GM12878 (cell line): ENCODE measurements at regions of chrX and their contacts with region 1.

Region 1: DNA sequence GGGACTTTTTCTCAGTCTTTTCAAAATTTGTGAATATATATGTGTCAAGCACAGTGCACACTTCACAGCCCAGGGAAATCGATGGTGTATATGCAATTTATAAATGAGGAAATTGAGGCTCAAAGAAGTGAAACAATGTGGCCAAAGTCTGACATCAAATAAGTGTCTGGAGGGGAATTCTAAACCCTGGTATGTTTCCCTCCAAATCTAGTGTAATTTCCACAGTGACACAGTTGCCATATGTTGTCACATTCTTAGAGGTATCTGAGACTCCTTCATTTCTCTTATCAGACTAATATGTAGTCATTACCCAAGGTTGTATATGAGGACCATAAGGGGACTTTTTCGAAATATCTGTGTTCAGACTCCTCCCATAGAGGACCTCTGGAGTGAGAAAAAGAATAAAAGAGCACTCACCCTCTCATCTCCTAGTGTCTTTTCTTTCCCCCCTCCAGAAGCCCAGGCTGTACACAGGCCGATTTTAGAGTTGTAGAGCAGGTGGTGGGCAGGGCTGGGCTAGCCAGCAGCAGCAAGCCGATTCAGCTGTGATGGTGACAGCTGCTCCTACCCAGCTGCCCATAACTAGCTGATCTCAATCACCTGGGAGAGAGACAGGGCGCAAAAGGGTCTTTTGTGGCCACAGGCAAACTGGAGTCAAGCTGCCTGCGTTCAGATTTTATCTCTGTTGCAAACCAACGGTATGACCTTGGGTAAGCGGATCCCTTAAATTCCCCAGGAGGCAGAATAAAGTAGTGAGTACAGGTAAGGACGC is 55.1 kb downstream of the CLCN5 start:
- DNase-seq: peak; percentile 1
- ATAC-seq: peak; percentile 82
- H3K4me3 ChIP-seq: no peak overlapping the region
- H3K27ac ChIP-seq: no peak overlapping the region; the same call in 1 of the 2 replicates
- H3K4me1 ChIP-seq: no peaks in the 10 kb centered on the region
- H3K27me3 ChIP-seq: no peaks in the 10 kb centered on the region
- CTCF ChIP-seq: no peak
- EP300 ChIP-seq: no peak
- POLR2A ChIP-seq: no peak
- RAD21 ChIP-seq: no peak

Region 2: DNA sequence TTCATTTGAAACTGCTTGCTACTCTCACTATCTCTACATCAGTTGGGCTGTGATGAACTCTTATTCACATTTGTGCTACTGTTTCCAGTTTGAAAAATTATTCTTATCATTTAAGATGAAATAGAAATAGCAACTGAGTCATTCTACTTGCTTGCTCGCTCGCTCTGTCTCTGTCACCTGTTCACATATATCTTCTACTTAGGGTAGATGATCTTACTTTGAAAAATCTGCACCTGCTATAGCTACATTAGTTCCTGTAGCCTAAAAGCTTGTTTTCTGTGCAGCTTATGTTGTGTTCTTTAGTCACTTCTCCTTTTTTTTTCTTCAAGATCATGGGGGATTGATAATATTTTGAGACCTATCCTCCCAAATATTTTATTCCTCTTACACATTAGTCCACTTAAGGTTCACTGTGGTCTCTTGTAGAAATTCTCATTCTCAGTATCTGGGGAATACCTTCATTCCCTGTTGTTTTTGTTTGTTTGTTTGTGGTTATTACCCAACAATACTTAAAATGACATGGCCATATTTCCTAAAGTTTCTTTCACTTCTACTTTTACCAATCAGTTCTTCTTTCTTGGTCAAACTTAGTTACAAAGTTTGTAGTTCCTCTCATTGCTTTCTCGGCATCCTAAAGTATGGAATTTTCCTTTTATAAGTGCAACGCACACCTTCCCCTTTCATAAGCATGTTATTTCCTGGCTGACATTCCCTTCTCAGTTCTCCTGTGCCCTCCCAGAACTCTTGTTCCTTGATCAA is 18.6 kb before region 1 on chrX:
- CTCF ChIA-PET with region 1: no interaction called
- POLR2A ChIA-PET with region 1: no interaction called
- RAD21 ChIA-PET with region 1: no interaction called
- SMC1A ChIA-PET with region 1: interaction called, 4 read pairs
- in situ Hi-C with region 1: no loop called
- intact Hi-C with region 1: loop called (anchors 1 kb)
- DNase-seq: no peak
- ATAC-seq: no peak
- H3K4me3 ChIP-seq: no peak overlapping the region
- H3K27ac ChIP-seq: peak overlapping the region; percentile 19; the same call in 1 of the 2 replicates
- H3K4me1 ChIP-seq: no peaks in the 10 kb centered on the region
- H3K27me3 ChIP-seq: no peaks in the 10 kb centered on the region
- CTCF ChIP-seq: no peak
- EP300 ChIP-seq: no peak
- POLR2A ChIP-seq: no peak
- RAD21 ChIP-seq: no peak

Region 3: DNA sequence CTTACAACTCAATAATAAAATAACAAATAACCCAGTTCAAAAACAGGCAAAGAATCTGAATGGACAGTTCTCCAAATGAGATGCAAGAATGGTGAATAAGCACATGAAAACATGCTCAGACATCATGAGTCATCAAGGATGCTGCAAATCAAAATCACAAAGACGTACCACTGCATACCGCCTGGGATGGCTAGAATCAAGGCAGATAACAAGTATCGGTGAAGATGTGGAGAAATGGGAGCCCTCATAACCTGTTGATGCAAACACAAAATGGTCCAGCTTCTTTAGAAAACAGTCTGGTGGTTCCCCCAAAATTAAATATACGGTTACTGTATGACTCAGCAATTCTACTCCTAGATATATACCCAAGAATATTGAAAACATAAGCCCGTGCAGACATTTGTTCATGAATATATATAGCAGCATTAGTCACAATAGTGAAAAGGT is 190.8 kb after region 1 on chrX:
- CTCF ChIA-PET with region 1: no interaction called
- POLR2A ChIA-PET with region 1: no interaction called
- RAD21 ChIA-PET with region 1: no interaction called
- SMC1A ChIA-PET with region 1: no interaction called
- in situ Hi-C with region 1: no loop called
- intact Hi-C with region 1: no loop called
- DNase-seq: no peak
- ATAC-seq: peak; percentile 66
- H3K4me3 ChIP-seq: no peak overlapping the region
- H3K27ac ChIP-seq: no peak overlapping the region
- H3K4me1 ChIP-seq: no peaks in the 10 kb centered on the region; the same call in 1 of the 2 replicates
- H3K27me3 ChIP-seq: no peaks in the 10 kb centered on the region
- CTCF ChIP-seq: no peak
- EP300 ChIP-seq: no peak
- POLR2A ChIP-seq: no peak
- RAD21 ChIP-seq: no peak

Region 4: DNA sequence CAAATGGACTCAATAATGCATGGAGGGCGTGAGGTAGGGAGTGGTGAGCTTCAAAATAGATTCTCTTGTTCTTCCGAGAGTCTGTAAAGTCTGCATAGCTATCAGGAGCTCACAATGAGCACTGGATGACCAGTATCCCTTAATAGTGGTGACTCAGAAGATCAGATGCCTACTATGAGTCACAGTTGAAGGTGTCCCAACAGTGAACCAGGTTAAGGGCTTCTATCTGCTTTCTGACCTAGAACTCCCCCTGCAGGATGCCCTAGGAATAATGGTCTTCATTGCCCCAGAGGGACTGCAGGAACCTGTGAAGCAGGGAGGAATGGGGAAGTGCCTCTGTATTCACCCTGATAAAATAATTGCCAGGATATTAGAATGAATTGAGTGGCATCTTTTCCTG is 471.1 kb after region 1 on chrX:
- CTCF ChIA-PET with region 1: no interaction called
- POLR2A ChIA-PET with region 1: no interaction called
- RAD21 ChIA-PET with region 1: no interaction called
- SMC1A ChIA-PET with region 1: no interaction called
- in situ Hi-C with region 1: no loop called
- intact Hi-C with region 1: no loop called
- DNase-seq: no peak
- ATAC-seq: peak; percentile 61
- H3K4me3 ChIP-seq: no peak overlapping the region
- H3K27ac ChIP-seq: no peak overlapping the region
- H3K4me1 ChIP-seq: no peaks in the 10 kb centered on the region
- H3K27me3 ChIP-seq: no peaks in the 10 kb centered on the region; a peak in 1 of 4 replicates
- CTCF ChIP-seq: peak; percentile 23 to 29 (median 27); a peak in 4 of 6 replicates
- EP300 ChIP-seq: no peak
- POLR2A ChIP-seq: no peak
- RAD21 ChIP-seq: no peak